ENCODE measurements at regions of chr1 and their contacts with region 1.

Region 1: DNA sequence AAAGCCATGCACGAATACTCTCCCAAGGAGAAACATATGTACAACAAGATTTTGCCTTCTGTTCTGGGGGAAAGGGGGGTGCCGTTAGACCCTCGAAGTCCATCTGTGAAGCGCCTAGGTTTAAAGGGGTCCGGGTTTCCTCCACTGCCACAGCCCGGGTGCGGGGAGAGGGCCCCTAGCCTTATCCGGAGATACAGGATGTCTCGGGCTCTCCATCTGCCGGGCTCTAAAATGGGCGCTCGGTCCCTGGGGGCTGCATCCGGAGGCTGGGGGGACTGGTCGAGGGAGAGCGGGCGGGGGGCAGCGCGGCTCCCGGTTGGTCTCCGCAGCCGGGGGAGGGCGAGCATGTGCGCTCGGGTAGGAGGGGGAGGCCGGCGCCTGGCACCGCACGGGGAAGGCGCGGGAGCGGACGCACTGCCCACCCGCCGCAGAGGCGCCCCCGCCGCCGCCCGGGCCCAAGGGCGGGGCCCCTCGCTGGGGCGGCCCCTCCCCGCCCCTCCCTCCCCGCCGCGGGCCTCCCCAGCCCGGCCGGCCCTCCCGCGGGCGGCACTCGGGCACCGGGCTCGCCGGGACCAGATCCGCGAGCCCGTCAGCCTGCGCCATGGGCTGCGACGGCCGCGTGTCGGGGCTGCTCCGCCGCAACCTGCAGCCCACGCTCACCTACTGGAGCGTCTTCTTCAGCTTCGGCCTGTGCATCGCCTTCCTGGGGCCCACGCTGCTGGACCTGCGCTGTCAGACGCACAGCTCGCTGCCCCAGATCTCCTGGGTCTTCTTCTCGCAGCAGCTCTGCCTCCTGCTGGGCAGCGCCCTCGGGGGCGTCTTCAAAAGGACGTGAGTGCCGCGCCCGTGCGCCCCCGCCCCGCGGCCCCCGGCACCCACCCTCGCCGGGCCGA is 63.1 kb downstream of the ELK4 start:
- DNase-seq: no peak
- H3K4me3 Mint-ChIP-seq: peak overlapping the region; percentile 26
- H3K27ac Mint-ChIP-seq: no peak overlapping the region
- H3K4me1 Mint-ChIP-seq: no peaks in the 10 kb centered on the region
- H3K27me3 Mint-ChIP-seq: peaks cover 83% of the 10 kb centered on the region
- CTCF ChIP-seq: no peak

Region 2: GRCh38 chr1:205528887-205529825 is 39.6 kb before region 1 on chr1:
- CTCF ChIA-PET with region 1: interaction called, 15 read pairs
- POLR2A ChIA-PET with region 1: no interaction called
- intact Hi-C with region 1: no loop called
- DNase-seq: peak; percentile 89
- H3K4me3 Mint-ChIP-seq: peak overlapping the region; percentile 32
- H3K27ac Mint-ChIP-seq: no peak overlapping the region
- H3K4me1 Mint-ChIP-seq: peaks cover 6% of the 10 kb centered on the region
- H3K27me3 Mint-ChIP-seq: no peaks in the 10 kb centered on the region
- CTCF ChIP-seq: peak; percentile 100